PC-3 (cell line): ENCODE measurements at regions of chr18 and their contacts with region 1.

Region 1: GRCh38 chr18:44601447-44601846 is 79.2 kb upstream of the SETBP1 start:
- DNase-seq: peak; percentile 78
- ATAC-seq: peak; percentile 62
- H3K4me3 ChIP-seq: no peak overlapping the region
- H3K27ac ChIP-seq: peak overlapping the region; percentile 92
- H3K4me1 ChIP-seq: peaks cover 34% of the 10 kb centered on the region
- H3K27me3 ChIP-seq: no peaks in the 10 kb centered on the region
- CTCF ChIP-seq: no peak

Region 2: GRCh38 chr18:44520981-44521672 is 80.3 kb before region 1 on chr18:
- CTCF ChIA-PET with region 1: no interaction called
- POLR2A ChIA-PET with region 1: no interaction called
- intact Hi-C with region 1: loop called (anchors 2 kb)
- DNase-seq: peak; percentile 71
- ATAC-seq: peak; percentile 94
- H3K4me3 ChIP-seq: peak overlapping the region; percentile 9; the same call in 1 of the 2 replicates
- H3K27ac ChIP-seq: peak overlapping the region; percentile 91
- H3K4me1 ChIP-seq: peaks cover 35% of the 10 kb centered on the region
- H3K27me3 ChIP-seq: no peaks in the 10 kb centered on the region
- CTCF ChIP-seq: no peak

Region 3: DNA sequence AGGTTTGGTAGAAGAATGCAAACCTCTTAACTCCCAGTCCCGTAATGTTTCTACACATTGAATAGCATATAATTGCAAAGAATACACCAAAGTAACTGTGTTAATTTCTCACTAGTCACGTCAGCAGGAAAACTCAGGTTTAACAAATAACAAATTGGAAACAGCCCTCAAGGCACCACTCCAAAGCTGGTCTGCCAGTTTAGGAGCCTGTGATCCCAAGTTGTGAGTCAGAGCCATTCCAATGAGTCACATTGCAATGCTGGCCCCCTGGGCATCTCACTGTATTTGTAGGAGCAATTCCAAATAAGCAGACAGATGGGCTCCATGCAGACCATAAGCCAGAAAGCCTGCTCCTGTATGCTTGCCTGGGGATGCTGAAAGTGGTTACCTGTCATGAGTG is 63.9 kb before region 1 on chr18:
- CTCF ChIA-PET with region 1: no interaction called
- POLR2A ChIA-PET with region 1: no interaction called
- intact Hi-C with region 1: loop called (anchors 1 kb)
- DNase-seq: peak; percentile 84
- ATAC-seq: peak; percentile 97
- H3K4me3 ChIP-seq: no peak overlapping the region
- H3K27ac ChIP-seq: peak overlapping the region; percentile 40
- H3K4me1 ChIP-seq: peaks cover 26% of the 10 kb centered on the region
- H3K27me3 ChIP-seq: no peaks in the 10 kb centered on the region
- CTCF ChIP-seq: no peak

Region 4: GRCh38 chr18:44637210-44638051 is 36.0 kb after region 1 on chr18:
- CTCF ChIA-PET with region 1: interaction called, 3 read pairs
- POLR2A ChIA-PET with region 1: no interaction called
- intact Hi-C with region 1: loop called (anchors 2 kb)
- DNase-seq: peak; percentile 65
- ATAC-seq: peak; percentile 91
- H3K4me3 ChIP-seq: 0 out of 2 replicates have a peak overlapping the region, but pooled peaks have one; percentile 33
- H3K27ac ChIP-seq: peak overlapping the region; percentile 79
- H3K4me1 ChIP-seq: peaks cover 21% of the 10 kb centered on the region
- H3K27me3 ChIP-seq: no peaks in the 10 kb centered on the region
- CTCF ChIP-seq: no peak

Region 5: DNA sequence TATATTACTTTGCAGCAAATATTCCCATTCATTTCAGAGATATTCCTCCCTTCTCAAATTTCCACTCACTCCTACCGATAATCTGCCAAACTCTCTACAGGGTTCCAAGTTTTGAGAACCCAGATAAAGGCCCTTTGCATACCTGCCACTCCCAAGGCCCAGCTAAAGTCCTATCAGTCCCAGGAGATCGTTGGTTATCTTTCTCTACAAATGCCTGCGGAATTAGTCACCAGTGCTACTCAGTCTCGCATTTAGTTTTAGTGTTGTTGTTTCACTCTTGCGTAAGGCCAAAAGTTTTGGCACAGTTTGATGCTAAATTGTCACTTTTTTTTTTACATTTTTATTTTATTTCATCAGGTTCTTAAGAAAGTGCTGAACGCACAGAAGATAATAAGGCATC is 50.0 kb after region 1 on chr18:
- CTCF ChIA-PET with region 1: no interaction called
- POLR2A ChIA-PET with region 1: no interaction called
- intact Hi-C with region 1: loop called (anchors 5 kb)
- DNase-seq: peak; percentile 62
- ATAC-seq: peak; percentile 80
- H3K4me3 ChIP-seq: no peak overlapping the region
- H3K27ac ChIP-seq: no peak overlapping the region
- H3K4me1 ChIP-seq: peaks cover 29% of the 10 kb centered on the region
- H3K27me3 ChIP-seq: no peaks in the 10 kb centered on the region
- CTCF ChIP-seq: no peak